ENCODE measurements at regions of chr17 and their contacts with region 1.

Region 1: DNA sequence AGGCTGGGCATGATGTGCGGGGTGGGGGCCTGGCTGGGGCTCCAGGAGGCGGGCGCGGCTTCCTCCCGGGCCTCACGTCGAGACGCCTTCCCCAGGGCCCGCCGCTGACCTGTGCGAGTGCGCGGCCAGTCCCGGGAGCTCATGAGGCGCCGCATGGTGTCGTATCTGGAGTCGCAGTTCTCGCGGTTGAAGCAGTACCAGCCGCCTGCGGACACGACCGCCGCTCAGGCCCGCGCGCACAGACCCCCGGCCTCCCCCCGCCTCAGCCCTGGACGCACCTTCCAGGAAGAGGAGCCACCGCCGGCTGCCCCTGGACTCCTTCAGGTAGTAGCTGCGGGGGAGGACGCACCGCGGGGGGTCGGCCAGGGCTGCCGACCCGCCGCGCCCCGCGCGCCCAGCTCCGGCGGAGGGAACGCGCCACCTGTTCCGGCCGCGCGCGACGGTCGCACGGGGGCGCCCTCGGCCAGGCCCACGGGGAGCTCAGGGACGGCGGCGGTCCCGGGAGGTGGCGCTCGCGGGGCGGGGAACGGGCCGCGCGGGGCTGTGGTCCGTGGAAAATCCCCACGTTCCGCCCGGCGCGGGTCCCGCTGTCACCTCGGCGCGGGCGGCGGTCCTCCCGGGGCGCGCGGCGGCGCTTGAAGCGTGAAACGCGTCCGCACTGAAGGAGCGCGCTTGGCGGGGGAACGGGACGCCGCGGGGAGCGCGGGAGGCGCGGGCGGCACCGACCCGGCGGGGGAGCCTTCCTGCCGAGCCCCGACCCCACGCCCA is 1.4 kb downstream of the NOTUM start:
- DNase-seq: peak; percentile 80 to 93
- ATAC-seq: peak; percentile 87
- H3K4me3 ChIP-seq: no peak overlapping the region
- H3K27ac ChIP-seq: no peak overlapping the region
- H3K4me1 ChIP-seq: no peaks in the 10 kb centered on the region
- H3K27me3 ChIP-seq: no peaks in the 10 kb centered on the region

Region 2: DNA sequence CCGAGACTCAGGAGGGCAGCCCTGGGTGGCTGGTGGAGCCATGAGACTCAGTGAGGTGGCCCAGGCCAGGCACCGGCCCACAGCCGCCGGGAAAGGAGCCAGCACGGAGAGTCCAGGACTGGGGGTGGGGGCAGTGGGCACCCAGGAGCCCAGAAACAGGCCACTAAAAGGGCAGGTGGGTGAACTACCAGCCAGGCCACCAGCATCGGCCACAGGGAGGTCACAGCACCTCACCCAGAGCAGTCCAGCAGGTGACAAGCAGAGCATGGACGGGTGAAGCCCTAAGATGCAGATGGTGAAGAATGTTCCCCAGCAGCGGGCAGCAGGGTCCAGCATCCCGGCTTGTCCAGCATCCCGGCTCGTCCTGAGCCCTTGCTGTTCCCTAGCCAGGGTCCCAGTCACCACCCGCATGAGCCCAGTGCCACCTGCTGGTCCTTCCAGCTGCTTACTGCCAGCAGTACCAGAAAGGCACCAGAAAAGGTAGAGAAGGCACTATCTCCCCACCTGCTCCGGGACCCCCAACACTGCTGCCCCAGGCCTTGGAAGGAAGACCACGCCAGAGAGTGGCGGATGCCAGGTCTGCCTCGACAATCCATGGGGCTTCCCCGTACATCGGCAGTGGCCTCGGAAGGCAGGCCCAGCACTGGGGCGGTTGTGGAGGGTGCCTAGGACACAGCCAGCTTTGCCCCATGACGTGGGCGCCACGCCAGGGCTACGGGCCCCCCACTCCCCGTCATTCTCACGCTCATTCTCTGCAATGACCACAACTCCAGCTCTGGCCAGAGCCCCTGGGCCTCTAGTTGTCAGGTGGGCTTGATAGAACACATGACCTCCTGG is 61.6 kb after region 1 on chr17:
- intact Hi-C with region 1: loop called (anchors 1 to 2 kb)
- DNase-seq: peak; percentile 85 to 92
- ATAC-seq: no peak
- H3K4me3 ChIP-seq: no peak overlapping the region
- H3K27ac ChIP-seq: no peak overlapping the region
- H3K4me1 ChIP-seq: no peaks in the 10 kb centered on the region
- H3K27me3 ChIP-seq: no peaks in the 10 kb centered on the region

Region 3: GRCh38 chr17:82153745-82154375 is 194.3 kb after region 1 on chr17:
- intact Hi-C with region 1: loop called (anchors 10 kb)
- DNase-seq: peak; percentile 85 to 92
- ATAC-seq: peak; percentile 90
- H3K4me3 ChIP-seq: no peak overlapping the region
- H3K27ac ChIP-seq: no peak overlapping the region
- H3K4me1 ChIP-seq: no peaks in the 10 kb centered on the region
- H3K27me3 ChIP-seq: no peaks in the 10 kb centered on the region